CD4-positive, alpha-beta T cell (primary cell): ENCODE measurements at regions of chr15 and their contacts with region 1.

Region 1: DNA sequence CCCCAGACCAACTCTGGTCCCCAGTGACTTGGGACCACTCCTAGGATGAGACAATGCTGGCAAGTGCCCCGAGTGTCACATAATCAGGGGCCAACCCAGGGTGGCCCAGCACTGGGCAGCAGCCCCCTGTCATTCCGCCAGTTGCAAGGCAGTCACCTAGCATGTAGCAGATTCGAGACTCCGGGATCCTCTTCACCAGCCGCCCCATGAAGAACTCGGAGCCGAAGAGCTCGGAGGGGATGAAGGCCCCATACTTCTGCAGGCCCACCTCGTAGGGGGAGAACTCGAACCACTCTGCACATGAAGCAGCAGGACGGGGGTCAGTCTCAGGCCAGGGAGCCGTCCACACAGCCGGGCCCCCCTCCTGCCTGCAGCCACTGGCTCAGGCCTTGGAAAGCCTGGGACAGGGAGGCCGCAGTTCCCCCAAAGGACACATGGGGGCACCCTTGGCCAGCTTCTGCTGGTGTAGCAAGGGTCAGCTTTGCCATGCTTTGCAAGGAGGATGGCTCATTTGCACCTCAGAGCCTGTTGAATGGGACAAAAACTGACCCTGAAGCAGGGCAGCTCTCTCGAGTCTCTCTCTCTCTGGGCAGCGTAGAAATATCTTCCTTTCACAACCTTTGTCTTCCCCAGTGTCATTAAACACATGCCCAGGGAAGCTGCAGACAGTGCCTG is 17.0 kb upstream of the EHD4 start:
- DNase-seq: peak; percentile 65 to 88 (median 78)
- ATAC-seq: peak; percentile 94
- H3K4me3 ChIP-seq: no peak overlapping the region
- H3K4me3 Mint-ChIP-seq: no peak overlapping the region
- H3K27ac ChIP-seq: no peak overlapping the region
- H3K27ac Mint-ChIP-seq: no peak overlapping the region
- H3K4me1 ChIP-seq: peaks cover 3% of the 10 kb centered on the region
- H3K4me1 Mint-ChIP-seq: no peaks in the 10 kb centered on the region
- H3K27me3 ChIP-seq: no peaks in the 10 kb centered on the region
- H3K27me3 Mint-ChIP-seq: no peaks in the 10 kb centered on the region
- CTCF ChIP-seq: peak; percentile 92

Region 2: GRCh38 chr15:42056934-42057779 is 67.8 kb after region 1 on chr15:
- CTCF ChIA-PET with region 1: interaction called, 12 read pairs
- POLR2A ChIA-PET with region 1: no interaction called
- intact Hi-C with region 1: loop called (anchors 1 kb)
- DNase-seq: peak in 13 of 14 experiments; percentile 15 to 82 (median 35)
- ATAC-seq: peak; percentile 81
- H3K4me3 ChIP-seq: peak overlapping the region; percentile 36
- H3K4me3 Mint-ChIP-seq: peak overlapping the region; percentile 61
- H3K27ac ChIP-seq: no peak overlapping the region
- H3K27ac Mint-ChIP-seq: peak overlapping the region; percentile 31
- H3K4me1 ChIP-seq: peaks cover 22% of the 10 kb centered on the region
- H3K4me1 Mint-ChIP-seq: peaks cover 14% of the 10 kb centered on the region
- H3K27me3 ChIP-seq: peaks cover 19 to 23% of the 10 kb centered on the region in 2 experiments
- H3K27me3 Mint-ChIP-seq: peaks cover 39% of the 10 kb centered on the region
- CTCF ChIP-seq: peak; percentile 31

Region 3: DNA sequence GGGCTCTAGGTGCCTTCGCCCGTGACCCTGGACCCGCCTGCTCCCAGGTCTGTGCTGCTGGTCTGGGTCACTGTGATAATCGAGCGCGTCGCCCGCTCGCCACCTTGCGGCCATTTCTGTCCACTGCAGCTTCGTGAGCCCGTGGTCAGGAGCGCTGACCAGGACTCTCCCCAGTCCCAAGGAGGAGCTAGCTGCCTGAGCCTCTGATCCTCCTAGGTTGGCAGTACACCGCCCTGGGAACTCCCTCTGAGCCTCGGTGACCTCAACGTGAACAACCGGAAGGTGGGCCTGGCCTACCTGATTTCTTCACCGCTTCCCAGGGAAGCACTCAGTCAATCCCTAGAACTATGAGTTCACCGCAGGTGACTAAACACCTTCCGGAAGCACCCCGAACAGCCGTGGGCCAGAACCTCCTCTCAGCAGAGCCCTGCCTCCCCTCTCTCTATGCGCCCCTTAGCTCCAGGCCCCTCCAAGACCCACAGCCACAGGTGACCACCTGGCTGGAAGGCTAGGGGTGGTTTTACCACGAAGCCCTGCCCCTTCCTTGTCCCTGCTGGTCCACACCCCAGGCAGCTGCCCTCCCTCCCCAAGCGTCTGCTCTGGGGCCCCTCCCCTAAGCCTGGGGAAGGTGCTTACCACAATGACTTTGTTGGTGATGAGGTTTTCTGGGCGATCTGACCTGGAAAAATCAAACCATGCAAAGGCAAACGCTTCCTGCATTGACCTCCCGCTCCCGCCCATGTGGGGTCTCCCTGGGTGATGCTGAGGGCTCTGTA is 95.3 kb after region 1 on chr15:
- CTCF ChIA-PET with region 1: interaction called, 14 read pairs
- POLR2A ChIA-PET with region 1: no interaction called
- intact Hi-C with region 1: loop called in 1 of 2 experiments (anchors 1 kb)
- DNase-seq: peak in 11 of 14 experiments; percentile 12 to 73 (median 32)
- ATAC-seq: peak; percentile 61
- H3K4me3 ChIP-seq: no peak overlapping the region
- H3K4me3 Mint-ChIP-seq: no peak overlapping the region
- H3K27ac ChIP-seq: no peak overlapping the region
- H3K27ac Mint-ChIP-seq: no peak overlapping the region
- H3K4me1 ChIP-seq: peaks cover 15% of the 10 kb centered on the region
- H3K4me1 Mint-ChIP-seq: no peaks in the 10 kb centered on the region
- H3K27me3 ChIP-seq: peaks cover 0 to 3% of the 10 kb centered on the region in 2 experiments
- H3K27me3 Mint-ChIP-seq: peaks cover 31% of the 10 kb centered on the region
- CTCF ChIP-seq: peak; percentile 81

Region 4: GRCh38 chr15:42121682-42122081 is 132.3 kb after region 1 on chr15:
- CTCF ChIA-PET with region 1: no interaction called
- POLR2A ChIA-PET with region 1: no interaction called
- intact Hi-C with region 1: no loop called
- DNase-seq: no peak
- ATAC-seq: no peak
- H3K4me3 ChIP-seq: no peak overlapping the region
- H3K4me3 Mint-ChIP-seq: no peak overlapping the region
- H3K27ac ChIP-seq: no peak overlapping the region
- H3K27ac Mint-ChIP-seq: no peak overlapping the region
- H3K4me1 ChIP-seq: no peaks in the 10 kb centered on the region
- H3K4me1 Mint-ChIP-seq: no peaks in the 10 kb centered on the region
- H3K27me3 ChIP-seq: no peaks in the 10 kb centered on the region
- H3K27me3 Mint-ChIP-seq: no peaks in the 10 kb centered on the region
- CTCF ChIP-seq: no peak

Region 5: DNA sequence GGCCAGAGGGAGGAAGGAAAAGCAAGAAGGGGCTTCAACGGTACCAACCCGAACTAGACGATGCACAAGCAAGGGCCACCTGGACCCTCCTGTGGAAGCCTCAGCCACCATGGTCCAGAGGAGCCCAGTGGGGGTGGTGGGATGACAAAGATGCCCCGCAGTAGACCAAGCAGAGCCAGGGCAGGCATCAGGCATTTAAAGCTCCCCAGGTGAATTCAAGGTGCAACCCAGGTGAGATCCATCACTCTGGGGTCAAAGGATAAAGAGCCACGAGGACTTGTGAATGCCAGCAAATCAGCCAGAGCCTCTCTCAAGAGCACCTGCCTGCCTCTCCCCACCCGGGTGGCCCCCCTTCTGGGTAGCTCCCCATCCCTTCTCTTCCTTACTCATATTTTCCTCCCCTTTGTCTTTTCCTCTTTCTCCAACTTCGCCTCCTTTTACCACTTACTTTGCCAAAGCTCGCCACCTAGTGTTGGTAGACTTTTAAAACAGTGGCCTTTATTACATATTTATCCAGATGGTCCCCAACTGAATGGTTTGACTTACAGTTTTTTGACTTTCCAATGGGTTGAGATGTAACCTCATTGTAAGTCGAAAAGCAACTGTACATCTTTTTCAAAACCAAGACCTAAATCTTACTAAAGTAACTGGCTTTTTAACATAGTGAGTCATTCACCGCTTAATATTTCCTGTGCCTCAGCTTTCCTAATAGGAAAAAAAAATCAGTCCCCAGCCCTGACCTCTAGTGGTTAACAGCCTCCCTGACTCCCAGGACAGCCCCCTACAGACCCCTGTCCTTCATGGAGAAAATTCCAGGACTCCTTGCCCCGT is 148.2 kb after region 1 on chr15:
- CTCF ChIA-PET with region 1: interaction called, 3 read pairs
- POLR2A ChIA-PET with region 1: no interaction called
- intact Hi-C with region 1: loop called (anchors 2 kb)
- DNase-seq: peak in 5 of 14 experiments; percentile 13 to 51 (median 36)
- ATAC-seq: no peak
- H3K4me3 ChIP-seq: no peak overlapping the region
- H3K4me3 Mint-ChIP-seq: no peak overlapping the region
- H3K27ac ChIP-seq: no peak overlapping the region
- H3K27ac Mint-ChIP-seq: no peak overlapping the region
- H3K4me1 ChIP-seq: no peaks in the 10 kb centered on the region
- H3K4me1 Mint-ChIP-seq: no peaks in the 10 kb centered on the region
- H3K27me3 ChIP-seq: no peaks in the 10 kb centered on the region
- H3K27me3 Mint-ChIP-seq: no peaks in the 10 kb centered on the region
- CTCF ChIP-seq: peak; percentile 68